ENCODE measurements at regions of chr6 and their contacts with region 1.

Region 1: DNA sequence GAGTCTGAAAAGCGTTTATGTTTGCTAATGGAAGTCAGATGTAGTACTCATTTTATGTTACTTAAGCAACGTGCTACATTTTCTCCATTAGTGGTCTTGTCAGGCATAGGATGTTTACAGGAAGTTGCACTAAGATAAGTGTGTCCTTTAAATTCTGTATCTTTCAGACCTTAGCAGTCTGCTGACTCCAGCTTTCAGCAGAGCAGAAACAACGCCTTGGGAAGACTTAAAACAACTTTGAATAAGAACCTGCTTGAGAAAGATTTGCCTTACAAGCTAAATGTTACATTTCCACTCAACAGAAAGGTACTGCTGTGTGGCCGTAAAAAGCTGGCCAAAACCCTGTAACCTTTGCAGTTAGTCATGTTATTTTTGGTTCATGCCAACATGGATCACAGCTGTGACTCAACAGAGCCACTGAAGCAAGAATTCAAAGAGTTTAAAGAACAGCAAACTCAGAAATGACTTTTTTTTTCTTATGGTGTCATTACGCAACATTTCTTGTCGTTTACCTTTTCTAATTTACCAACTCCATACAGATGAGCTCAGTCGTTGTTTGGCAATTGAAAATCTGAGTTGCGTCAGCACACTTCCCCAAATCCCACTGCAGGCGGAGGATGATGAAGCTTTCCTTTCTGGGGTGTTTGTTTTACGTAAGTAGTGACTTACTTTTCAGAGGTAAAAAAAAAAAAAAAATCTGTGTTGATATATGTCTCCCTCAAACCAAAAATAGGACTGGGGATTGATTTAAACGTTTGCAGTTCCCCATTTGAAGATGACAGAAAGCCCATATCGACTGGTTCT is 27.9 kb upstream of the BMP6 start:
- DNase-seq: peak; percentile 96
- H3K4me3 ChIP-seq: peak overlapping the region in 1 of 3 experiments; percentile 1
- H3K27ac ChIP-seq: peak overlapping the region; percentile 87
- H3K4me1 ChIP-seq: peaks cover 18% of the 10 kb centered on the region
- H3K27me3 ChIP-seq: no peaks in the 10 kb centered on the region
- CTCF ChIP-seq: no peak

Region 2: DNA sequence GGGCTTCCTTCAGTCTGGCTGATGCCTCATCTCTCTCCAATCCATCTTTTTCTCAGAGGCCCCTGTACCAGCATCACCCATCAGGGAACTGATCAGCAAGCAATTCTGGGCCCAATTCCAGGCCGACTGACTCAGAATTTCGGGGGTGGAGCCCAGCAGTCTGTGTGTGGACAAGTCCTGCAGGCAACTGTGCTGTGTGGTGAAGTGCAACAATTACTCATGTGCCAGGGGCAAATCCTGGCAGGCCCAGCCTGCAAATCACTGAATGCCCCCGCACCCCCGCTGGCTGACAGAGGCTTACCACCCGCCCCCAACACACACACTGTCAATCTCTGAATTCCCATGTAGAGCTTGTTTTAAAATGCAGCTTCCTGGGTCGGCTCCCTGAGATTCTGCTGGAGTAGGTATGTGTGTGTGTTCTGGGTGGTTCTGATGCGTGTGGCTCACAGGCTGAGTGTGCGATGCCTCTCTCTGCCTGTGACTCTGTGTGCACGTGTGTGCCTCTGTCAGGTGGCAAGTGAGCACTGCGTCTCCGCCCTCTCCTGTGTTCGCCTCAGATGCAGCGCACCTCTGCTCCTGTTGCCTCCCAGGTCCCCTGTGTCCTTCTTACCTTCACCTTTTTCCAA is 430.4 kb before region 1 on chr6:
- CTCF ChIA-PET with region 1: interaction called, 11 read pairs
- dilution Hi-C with region 1: no loop called
- in situ Hi-C with region 1: no loop called
- intact Hi-C with region 1: no loop called
- DNase-seq: peak; percentile 99
- H3K4me3 ChIP-seq: peak overlapping the region in 2 of 3 experiments; percentile 28 to 40
- H3K27ac ChIP-seq: peak overlapping the region; percentile 67
- H3K4me1 ChIP-seq: peaks cover 22% of the 10 kb centered on the region
- H3K27me3 ChIP-seq: no peaks in the 10 kb centered on the region
- CTCF ChIP-seq: no peak

Region 3: DNA sequence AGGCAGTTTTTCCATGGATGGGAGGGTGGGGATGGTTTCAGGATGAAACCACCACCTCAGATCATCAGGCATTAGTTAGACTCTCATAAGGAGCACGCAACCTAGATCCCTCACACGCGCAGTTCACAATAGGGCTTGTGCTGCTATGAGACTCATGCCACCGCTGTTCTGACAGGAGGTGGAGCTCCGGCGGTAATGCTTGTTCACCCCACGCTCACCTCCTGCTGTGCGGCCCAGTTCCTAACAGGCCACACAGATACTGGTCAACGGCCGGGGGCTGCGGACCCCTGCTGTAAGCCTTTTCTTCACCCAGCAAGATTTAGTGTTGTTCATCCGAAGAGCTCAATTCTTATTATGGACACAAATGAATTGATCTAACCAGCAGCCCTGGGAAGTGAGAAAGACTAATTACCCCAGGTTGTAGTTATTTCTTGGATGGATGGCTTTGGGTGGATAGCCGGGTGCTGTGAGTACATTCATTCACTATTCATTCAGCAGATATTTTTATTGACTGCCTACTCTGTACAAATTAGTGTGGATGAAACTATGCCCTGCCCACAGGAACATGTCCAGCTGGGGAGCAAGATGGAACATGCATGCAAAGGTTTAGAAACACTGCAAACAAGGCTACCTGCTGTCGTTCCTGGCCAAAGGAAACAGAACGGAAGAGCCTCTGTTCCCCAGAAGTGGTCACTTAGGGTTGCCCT is 251.2 kb before region 1 on chr6:
- CTCF ChIA-PET with region 1: no interaction called
- dilution Hi-C with region 1: no loop called
- in situ Hi-C with region 1: no loop called
- intact Hi-C with region 1: no loop called
- DNase-seq: peak; percentile 94
- H3K4me3 ChIP-seq: peak overlapping the region in 2 of 3 experiments; percentile 19 to 27
- H3K27ac ChIP-seq: peak overlapping the region; percentile 87
- H3K4me1 ChIP-seq: peaks cover 18% of the 10 kb centered on the region
- H3K27me3 ChIP-seq: no peaks in the 10 kb centered on the region
- CTCF ChIP-seq: peak in 1 of 2 donors; percentile 22

Region 4: DNA sequence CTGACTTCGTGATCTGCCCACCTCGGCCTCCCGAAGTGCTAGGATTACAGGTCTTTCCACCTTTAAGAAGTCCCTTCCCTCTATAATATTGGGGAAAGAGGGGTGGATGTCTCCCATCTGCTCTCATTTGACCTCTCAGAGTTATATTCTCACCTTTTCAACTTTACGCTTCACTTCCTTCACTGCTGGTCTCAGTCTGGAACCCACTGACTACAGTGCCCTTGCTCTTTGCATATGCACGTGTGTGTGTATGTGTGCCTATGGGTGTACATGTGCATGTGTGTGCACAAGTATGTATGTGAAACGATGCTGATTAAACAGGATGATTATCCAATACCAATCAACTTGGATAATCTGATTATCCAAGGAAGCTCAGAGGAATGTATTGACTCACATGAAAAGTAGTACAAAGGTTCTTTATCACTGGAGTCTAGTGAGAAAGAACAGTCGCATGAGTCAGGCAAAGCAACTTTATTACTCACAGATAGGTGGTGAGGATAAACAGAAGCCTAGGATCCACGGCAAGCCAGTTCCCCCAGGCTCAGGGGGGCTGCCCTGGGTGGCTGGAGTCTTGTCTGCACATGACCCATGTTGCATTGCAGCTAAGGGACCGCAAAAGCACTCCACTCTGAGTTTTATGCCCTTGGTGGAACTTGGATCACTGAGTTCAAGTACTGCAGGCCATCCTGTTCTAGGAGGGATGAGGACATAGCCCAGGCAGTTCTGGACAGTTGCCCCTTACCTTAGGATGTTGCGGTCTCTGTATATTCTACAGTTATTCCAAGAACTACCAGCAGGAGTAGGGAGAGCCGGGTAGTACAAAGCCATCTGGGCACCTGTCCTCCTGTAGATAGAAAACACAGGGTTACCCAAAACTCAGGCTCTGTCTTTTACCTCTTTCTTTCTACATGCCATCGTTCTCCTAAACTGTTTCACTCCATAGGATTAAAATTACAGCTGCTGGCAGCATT is 57.1 kb before region 1 on chr6:
- CTCF ChIA-PET with region 1: no interaction called
- dilution Hi-C with region 1: no loop called
- in situ Hi-C with region 1: no loop called
- intact Hi-C with region 1: loop called (anchors 5 kb)
- DNase-seq: peak; percentile 94
- H3K4me3 ChIP-seq: no peak overlapping the region
- H3K27ac ChIP-seq: peak overlapping the region; percentile 52
- H3K4me1 ChIP-seq: peaks cover 37% of the 10 kb centered on the region
- H3K27me3 ChIP-seq: no peaks in the 10 kb centered on the region
- CTCF ChIP-seq: peak; percentile 20 to 23

Measured in mammary epithelial cell (primary cell).